ENCODE measurements at regions of chr6 and their contacts with region 1.

Region 1: GRCh38 chr6:81451787-81452186 is 300.7 kb downstream of the TENT5A start:
- DNase-seq: no peak
- H3K4me3 ChIP-seq: no peak overlapping the region
- H3K27ac ChIP-seq: no peak overlapping the region
- H3K4me1 ChIP-seq: peaks cover 9% of the 10 kb centered on the region
- H3K27me3 ChIP-seq: no peaks in the 10 kb centered on the region
- CTCF ChIP-seq: no peak

Region 2: GRCh38 chr6:81241126-81242041 is 210.4 kb before region 1 on chr6:
- intact Hi-C with region 1: loop called (anchors 10 kb)
- DNase-seq: no peak
- H3K4me3 ChIP-seq: no peak overlapping the region
- H3K27ac ChIP-seq: no peak overlapping the region
- H3K4me1 ChIP-seq: no peaks in the 10 kb centered on the region
- H3K27me3 ChIP-seq: no peaks in the 10 kb centered on the region
- CTCF ChIP-seq: peak; percentile 56